CD8-positive, alpha-beta T cell (primary cell): ENCODE measurements at regions of chr1 and their contacts with region 1.

Region 1: DNA sequence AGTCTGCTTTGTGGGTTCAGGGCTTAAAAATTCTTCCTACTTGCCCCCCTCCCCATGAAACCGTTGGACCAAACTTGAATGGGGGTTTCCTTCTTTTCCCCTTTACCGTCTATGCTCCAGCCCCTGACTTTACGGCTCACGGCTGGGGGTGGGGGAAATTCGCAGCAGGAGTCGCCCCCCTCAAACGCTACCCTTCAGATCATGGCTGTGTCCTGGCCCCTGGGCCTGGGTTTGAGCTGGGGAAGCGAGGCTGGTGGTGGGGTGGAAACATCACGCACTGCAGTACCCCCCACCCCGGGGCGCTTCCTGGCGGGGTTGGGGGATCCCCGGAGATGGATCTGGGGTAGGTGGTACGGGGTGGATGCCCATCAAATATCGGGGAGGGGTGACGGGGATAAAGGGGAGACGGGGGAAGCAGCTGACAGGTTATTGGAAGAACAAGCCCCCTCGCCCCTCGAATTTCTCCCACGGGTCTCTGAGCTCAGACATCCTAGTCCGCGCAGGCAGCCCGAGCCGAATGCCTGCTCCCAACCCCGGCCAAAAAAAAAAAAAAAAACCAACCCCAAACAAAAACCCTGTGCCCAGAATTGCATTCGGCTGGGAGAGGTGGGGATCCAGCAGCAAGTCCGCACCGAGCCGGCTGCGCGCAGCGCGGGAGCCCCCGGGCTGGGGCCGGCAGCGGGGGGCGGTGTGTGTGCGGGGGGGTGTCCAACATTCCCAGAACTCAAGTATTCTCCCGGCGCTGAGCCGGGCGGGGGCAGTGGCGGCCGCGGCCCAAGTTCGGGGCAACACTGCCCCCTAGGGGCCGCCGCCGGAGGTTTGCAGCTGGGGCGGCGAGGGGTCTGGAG is 59.0 kb upstream of the ACOT11 start:
- DNase-seq: peak; percentile 45 to 89 (median 74)
- ATAC-seq: peak; percentile 47
- H3K4me3 ChIP-seq: peak overlapping the region; percentile 71 to 90
- H3K4me3 Mint-ChIP-seq: peak overlapping the region; percentile 83
- H3K27ac ChIP-seq: peak overlapping the region; percentile 42 to 73
- H3K27ac Mint-ChIP-seq: peak overlapping the region; percentile 67
- H3K4me1 ChIP-seq: peaks cover 34% of the 10 kb centered on the region
- H3K4me1 Mint-ChIP-seq: peaks cover 37% of the 10 kb centered on the region
- H3K27me3 ChIP-seq: peaks cover 0 to 3% of the 10 kb centered on the region in 2 experiments
- H3K27me3 Mint-ChIP-seq: peaks cover 3% of the 10 kb centered on the region
- CTCF ChIP-seq: peak; percentile 96

Region 2: GRCh38 chr1:53878492-53879105 is 610.4 kb before region 1 on chr1:
- CTCF ChIA-PET with region 1: no interaction called
- POLR2A ChIA-PET with region 1: no interaction called
- intact Hi-C with region 1: loop called in 1 of 2 experiments (anchors 2 kb)
- DNase-seq: peak in 2 of 9 experiments; percentile 40 to 51
- ATAC-seq: no peak
- H3K4me3 ChIP-seq: no peak overlapping the region
- H3K4me3 Mint-ChIP-seq: no peak overlapping the region
- H3K27ac ChIP-seq: no peak overlapping the region
- H3K27ac Mint-ChIP-seq: no peak overlapping the region
- H3K4me1 ChIP-seq: no peaks in the 10 kb centered on the region
- H3K4me1 Mint-ChIP-seq: peaks cover 8% of the 10 kb centered on the region
- H3K27me3 ChIP-seq: no peaks in the 10 kb centered on the region
- H3K27me3 Mint-ChIP-seq: no peaks in the 10 kb centered on the region
- CTCF ChIP-seq: no peak

Region 3: GRCh38 chr1:54052934-54053744 is 435.9 kb before region 1 on chr1 and contains the starts of genes TCEANC2 and TMEM59:
- CTCF ChIA-PET with region 1: interaction called, 4 read pairs
- POLR2A ChIA-PET with region 1: no interaction called
- intact Hi-C with region 1: loop called (anchors 1 to 5 kb)
- DNase-seq: peak; percentile 94 to 100 (median 97)
- ATAC-seq: peak; percentile 89
- H3K4me3 ChIP-seq: peak within 1 kb of the TSS; percentile 87 to 89
- H3K4me3 Mint-ChIP-seq: no peak within 1 kb of the TSS
- H3K27ac ChIP-seq: peak within 1 kb of the TSS; percentile 89 to 93
- H3K27ac Mint-ChIP-seq: no peak within 1 kb of the TSS
- H3K4me1 ChIP-seq: peaks cover 39% of the 10 kb centered on the region
- H3K4me1 Mint-ChIP-seq: peaks cover 51% of the 10 kb centered on the region
- H3K27me3 ChIP-seq: no peaks in the 10 kb centered on the region
- H3K27me3 Mint-ChIP-seq: no peaks in the 10 kb centered on the region
- CTCF ChIP-seq: no peak
- total RNA-seq, gene TCEANC2: 1.8 to 2.1 TPM
- total RNA-seq, gene TMEM59: 125 to 142 TPM

Region 4: GRCh38 chr1:54199765-54200518 is 289.1 kb before region 1 on chr1 and contains the starts of genes CYB5RL and MRPL37:
- CTCF ChIA-PET with region 1: no interaction called
- POLR2A ChIA-PET with region 1: interaction called, 12 read pairs
- intact Hi-C with region 1: loop called (anchors 1 kb)
- DNase-seq: peak; percentile 74 to 96 (median 89)
- ATAC-seq: peak; percentile 97
- H3K4me3 ChIP-seq: peak within 1 kb of the TSS; percentile 59 to 93
- H3K4me3 Mint-ChIP-seq: peak within 1 kb of the TSS; percentile 94
- H3K27ac ChIP-seq: peak within 1 kb of the TSS; percentile 60 to 75
- H3K27ac Mint-ChIP-seq: peak within 1 kb of the TSS; percentile 84
- H3K4me1 ChIP-seq: peaks cover 19% of the 10 kb centered on the region
- H3K4me1 Mint-ChIP-seq: peaks cover 43% of the 10 kb centered on the region
- H3K27me3 ChIP-seq: no peaks in the 10 kb centered on the region
- H3K27me3 Mint-ChIP-seq: no peaks in the 10 kb centered on the region
- CTCF ChIP-seq: no peak
- total RNA-seq, gene CYB5RL: 2.1 to 3.0 TPM
- total RNA-seq, gene MRPL37: 27.4 to 29.8 TPM

Region 5: DNA sequence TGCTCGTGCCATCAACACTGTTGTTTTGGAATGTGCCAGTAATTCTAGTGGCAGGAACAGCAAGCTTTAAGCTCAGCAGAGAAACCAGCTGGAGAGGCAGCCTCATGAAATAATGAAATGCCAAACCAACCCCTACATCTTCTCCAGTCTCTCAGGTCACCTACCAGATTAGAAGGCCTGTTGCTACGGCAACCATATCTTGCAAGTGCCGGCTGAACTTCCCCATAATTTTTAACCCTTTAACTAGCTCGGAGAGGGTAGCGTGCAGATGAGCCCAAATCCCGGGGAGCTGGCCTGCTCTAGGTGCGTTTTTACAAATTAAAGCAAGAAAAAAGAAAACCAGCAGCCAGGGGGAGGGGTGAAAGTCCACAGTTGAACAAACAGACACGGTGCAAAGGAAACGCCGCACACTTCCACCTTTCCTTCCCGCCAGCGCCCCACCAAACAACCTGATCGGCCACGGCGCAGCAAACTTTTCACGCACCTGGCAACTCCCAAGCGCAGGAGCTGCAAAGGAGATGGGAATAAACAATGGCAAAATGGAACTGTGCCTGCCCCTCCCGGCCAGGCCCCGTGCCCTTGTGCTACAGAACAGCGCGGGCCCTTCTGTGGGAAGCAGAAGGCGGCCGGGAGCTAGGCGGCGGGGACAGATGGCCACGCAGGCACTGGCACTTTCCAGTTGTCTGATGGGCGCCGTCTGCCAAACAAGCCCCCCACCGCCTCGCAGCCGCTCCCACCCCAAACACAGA is 132.9 kb before region 1 on chr1:
- CTCF ChIA-PET with region 1: interaction called, 6 read pairs
- POLR2A ChIA-PET with region 1: no interaction called
- intact Hi-C with region 1: loop called (anchors 1 kb)
- DNase-seq: peak in 2 of 9 experiments; percentile 29 to 54
- ATAC-seq: peak; percentile 3
- H3K4me3 ChIP-seq: peak overlapping the region; percentile 36 to 64
- H3K4me3 Mint-ChIP-seq: peak overlapping the region; percentile 86
- H3K27ac ChIP-seq: peak overlapping the region; percentile 18 to 41
- H3K27ac Mint-ChIP-seq: peak overlapping the region; percentile 92
- H3K4me1 ChIP-seq: peaks cover 53% of the 10 kb centered on the region
- H3K4me1 Mint-ChIP-seq: peaks cover 88% of the 10 kb centered on the region
- H3K27me3 ChIP-seq: no peaks in the 10 kb centered on the region
- H3K27me3 Mint-ChIP-seq: no peaks in the 10 kb centered on the region
- CTCF ChIP-seq: no peak

Region 6: GRCh38 chr1:54499360-54500106 is 10.5 kb after region 1 on chr1:
- CTCF ChIA-PET with region 1: interaction called, 14 read pairs
- POLR2A ChIA-PET with region 1: no interaction called
- intact Hi-C with region 1: no loop called
- DNase-seq: peak in 5 of 9 experiments; percentile 42 to 64 (median 54)
- ATAC-seq: peak; percentile 73
- H3K4me3 ChIP-seq: peak overlapping the region; percentile 22 to 43
- H3K4me3 Mint-ChIP-seq: peak overlapping the region; percentile 75
- H3K27ac ChIP-seq: no peak overlapping the region
- H3K27ac Mint-ChIP-seq: no peak overlapping the region
- H3K4me1 ChIP-seq: peaks cover 12% of the 10 kb centered on the region
- H3K4me1 Mint-ChIP-seq: peaks cover 8% of the 10 kb centered on the region
- H3K27me3 ChIP-seq: peaks cover 9 to 10% of the 10 kb centered on the region in 2 experiments
- H3K27me3 Mint-ChIP-seq: peaks cover 36% of the 10 kb centered on the region
- CTCF ChIP-seq: peak; percentile 34